ENCODE measurements at regions of chr7 and their contacts with region 1.

Region 1: GRCh38 chr7:77587272-77587671 is 50.2 kb downstream of the PTPN12 start:
- H3K4me3 Mint-ChIP-seq: no peak overlapping the region
- H3K27ac Mint-ChIP-seq: no peak overlapping the region
- H3K4me1 Mint-ChIP-seq: no peaks in the 10 kb centered on the region
- H3K27me3 Mint-ChIP-seq: no peaks in the 10 kb centered on the region

Region 2: GRCh38 chr7:77370606-77371005 is 216.7 kb before region 1 on chr7:
- intact Hi-C with region 1: loop called (anchors 10 kb)
- H3K4me3 Mint-ChIP-seq: no peak overlapping the region
- H3K27ac Mint-ChIP-seq: no peak overlapping the region
- H3K4me1 Mint-ChIP-seq: peaks cover 26% of the 10 kb centered on the region
- H3K27me3 Mint-ChIP-seq: no peaks in the 10 kb centered on the region

Region 3: GRCh38 chr7:77627309-77627676 is 40.0 kb after region 1 on chr7:
- intact Hi-C with region 1: no loop called
- H3K4me3 Mint-ChIP-seq: no peak overlapping the region
- H3K27ac Mint-ChIP-seq: no peak overlapping the region
- H3K4me1 Mint-ChIP-seq: no peaks in the 10 kb centered on the region
- H3K27me3 Mint-ChIP-seq: no peaks in the 10 kb centered on the region